ENCODE measurements at regions of chr5 and their contacts with region 1.

Region 1: GRCh38 chr5:74919487-74919886 is 53.3 kb upstream of the FAM169A start:
- DNase-seq: no peak
- ATAC-seq: peak; percentile 55; the same call in 1 of the 2 replicates
- H3K4me3 ChIP-seq: no peak overlapping the region
- H3K27ac ChIP-seq: no peak overlapping the region
- H3K4me1 ChIP-seq: peaks cover 14% of the 10 kb centered on the region
- H3K27me3 ChIP-seq: no peaks in the 10 kb centered on the region
- CTCF ChIP-seq: peak; percentile 82

Region 2: GRCh38 chr5:74673011-74673790 is 246.3 kb before region 1 on chr5:
- CTCF ChIA-PET with region 1: no interaction called
- POLR2A ChIA-PET with region 1: no interaction called
- in situ Hi-C with region 1: no loop called
- intact Hi-C with region 1: loop called (anchors 1 kb)
- DNase-seq: no peak
- ATAC-seq: peak; percentile 59; the same call in 1 of the 2 replicates
- H3K4me3 ChIP-seq: no peak overlapping the region
- H3K27ac ChIP-seq: no peak overlapping the region
- H3K4me1 ChIP-seq: no peaks in the 10 kb centered on the region
- H3K27me3 ChIP-seq: no peaks in the 10 kb centered on the region
- CTCF ChIP-seq: peak; percentile 68

Region 3: GRCh38 chr5:74717596-74717995 is 201.9 kb before region 1 on chr5:
- CTCF ChIA-PET with region 1: interaction called, 3 read pairs
- POLR2A ChIA-PET with region 1: interaction called, 18 read pairs
- in situ Hi-C with region 1: no loop called
- intact Hi-C with region 1: no loop called
- DNase-seq: no peak
- ATAC-seq: no peak
- H3K4me3 ChIP-seq: no peak overlapping the region
- H3K27ac ChIP-seq: no peak overlapping the region
- H3K4me1 ChIP-seq: no peaks in the 10 kb centered on the region
- H3K27me3 ChIP-seq: no peaks in the 10 kb centered on the region
- CTCF ChIP-seq: no peak

Region 4: GRCh38 chr5:74766849-74767578 is 152.5 kb before region 1 on chr5 and contains the starts of genes GFM2 and NSA2:
- CTCF ChIA-PET with region 1: no interaction called
- POLR2A ChIA-PET with region 1: no interaction called
- in situ Hi-C with region 1: no loop called
- intact Hi-C with region 1: loop called (anchors 10 kb)
- DNase-seq: peak; percentile 88
- ATAC-seq: peak; percentile 93
- H3K4me3 ChIP-seq: peak within 1 kb of the TSS; percentile 99 to 100
- H3K27ac ChIP-seq: peak within 1 kb of the TSS; percentile 98
- H3K4me1 ChIP-seq: peaks cover 25% of the 10 kb centered on the region
- H3K27me3 ChIP-seq: no peaks in the 10 kb centered on the region
- CTCF ChIP-seq: no peak
- total RNA-seq, gene GFM2: 22.5 TPM
- total RNA-seq, gene NSA2: 42.7 TPM

Measured in Panc1 (cell line).